Pancreas (tissue), 10 donors: ENCODE measurements at regions of chr11 and their contacts with region 1.

Region 1: DNA sequence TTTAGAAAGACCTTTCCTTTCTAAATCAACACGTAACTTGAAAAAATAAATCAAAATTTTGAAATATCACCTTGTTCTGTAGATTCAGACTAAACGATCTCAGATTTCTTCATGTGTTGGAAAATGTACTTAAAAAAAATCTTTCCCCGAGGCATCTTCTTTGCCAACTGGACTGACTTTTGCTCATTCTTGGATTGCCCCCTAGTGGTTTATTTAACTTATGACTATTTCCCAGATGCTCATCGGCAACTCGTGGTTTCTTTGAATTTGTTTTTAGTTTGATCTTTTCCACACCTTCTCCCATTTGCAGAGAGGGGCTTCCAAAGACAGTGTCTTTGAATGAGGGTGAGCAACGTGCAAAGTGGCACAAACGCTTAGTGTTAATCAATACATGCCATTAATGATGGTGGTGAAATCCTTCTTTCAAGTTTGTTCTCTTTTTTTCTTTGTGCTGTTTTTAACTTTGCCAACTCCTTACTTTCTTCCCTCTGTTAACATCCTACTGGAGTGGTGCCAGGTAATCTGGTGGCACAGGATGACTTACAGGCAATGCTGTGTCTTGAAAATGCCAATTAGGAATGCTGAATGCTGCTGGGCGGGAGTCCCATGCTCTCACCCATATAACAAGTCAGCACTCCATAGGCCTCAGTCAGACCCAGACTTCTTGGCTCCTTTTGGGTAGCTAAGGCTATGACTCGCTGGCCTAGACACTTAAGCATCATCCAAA is 18.3 kb downstream of the PRSS23 start:
- DNase-seq: peak in 1 of 6 donors; percentile 16
- ATAC-seq: peak; percentile 61 to 90 (median 83)
- H3K4me3 ChIP-seq: no peak overlapping the region
- H3K27ac ChIP-seq: no peak overlapping the region
- H3K4me1 ChIP-seq: peaks cover 0 to 4% (median 0%) of the 10 kb centered on the region in 3 donors
- H3K27me3 ChIP-seq: no peaks in the 10 kb centered on the region
- CTCF ChIP-seq: peak; percentile 49 to 76 (median 60)

Region 2: DNA sequence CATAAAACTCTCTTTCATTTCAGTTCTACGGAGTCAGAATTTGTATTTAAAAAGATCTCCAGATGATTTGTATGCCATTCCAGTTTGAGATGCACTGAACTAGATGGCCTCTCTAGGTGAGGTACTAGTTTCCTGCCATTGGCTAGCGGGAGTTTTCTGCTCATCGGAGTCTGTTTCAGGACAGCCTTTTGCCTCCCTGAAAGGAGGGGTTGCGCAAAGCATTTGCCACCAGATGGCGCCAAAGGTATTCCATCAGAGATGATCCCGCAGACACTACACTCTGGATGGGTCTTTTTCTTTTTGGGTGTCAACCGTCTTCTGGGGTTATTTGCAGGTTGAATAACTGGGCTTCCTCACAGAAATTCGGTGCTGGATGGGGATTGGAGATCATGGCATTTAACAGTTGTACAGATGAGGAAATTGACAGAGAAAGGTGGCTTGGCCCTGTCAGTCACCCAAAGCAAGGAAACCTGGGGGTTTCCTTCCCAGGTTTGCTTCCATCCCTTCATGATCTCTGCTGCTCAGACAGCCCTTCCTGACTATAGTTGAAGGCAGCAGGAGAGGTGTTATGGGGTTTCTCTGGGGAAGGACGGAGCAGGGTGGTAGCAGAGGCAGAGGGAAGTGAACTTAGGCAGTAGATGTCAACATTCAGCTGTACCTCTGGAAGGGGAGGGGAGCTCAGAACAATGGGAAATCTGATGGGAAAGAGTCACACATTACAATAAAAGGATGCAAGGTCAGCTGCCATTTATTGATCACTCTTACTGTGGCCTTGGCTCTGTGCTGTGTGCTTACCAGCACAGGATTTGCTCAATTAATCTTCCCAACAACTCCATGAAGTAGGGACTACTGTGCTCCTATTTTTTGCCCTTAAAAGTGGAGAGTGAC is 362.3 kb before region 1 on chr11:
- intact Hi-C with region 1: loop called (anchors 5 to 10 kb)
- DNase-seq: peak; percentile 60 to 85 (median 78)
- ATAC-seq: peak; percentile 76 to 86 (median 84)
- H3K4me3 ChIP-seq: no peak overlapping the region
- H3K27ac ChIP-seq: peak overlapping the region in 1 of 4 donors; percentile 44
- H3K4me1 ChIP-seq: peaks cover 0 to 3% (median 0%) of the 10 kb centered on the region in 3 donors
- H3K27me3 ChIP-seq: no peaks in the 10 kb centered on the region
- CTCF ChIP-seq: peak; percentile 71 to 84 (median 72)

Region 3: DNA sequence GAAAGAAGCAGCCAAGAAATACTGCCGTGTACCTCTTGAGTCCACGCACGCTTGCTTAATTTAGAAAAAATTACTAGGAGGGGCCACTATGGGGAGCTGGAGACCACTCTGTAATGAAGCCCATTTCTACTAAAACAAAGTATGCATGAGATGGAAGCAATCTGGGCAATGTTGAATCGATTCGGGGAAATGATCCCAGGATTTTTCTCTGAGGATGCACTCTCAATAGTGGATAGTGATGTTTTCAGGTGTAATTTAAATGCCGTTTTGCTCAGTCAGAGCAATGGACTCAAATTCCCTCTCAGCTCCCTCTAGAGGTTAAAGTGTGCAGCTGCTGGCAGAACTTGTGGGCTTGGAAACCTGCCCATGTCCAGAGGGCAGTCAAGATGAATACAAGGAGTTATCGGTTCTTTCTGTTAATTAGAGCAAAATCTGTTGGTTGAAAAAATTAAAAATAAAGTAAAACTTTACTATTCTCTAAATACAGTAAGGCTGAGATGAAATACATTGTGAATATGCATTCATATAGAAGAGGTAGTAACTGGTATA is 210.3 kb before region 1 on chr11:
- intact Hi-C with region 1: loop called in 1 of 3 experiments (anchors 10 kb)
- DNase-seq: peak; percentile 56 to 81 (median 66)
- ATAC-seq: peak; percentile 85 to 96 (median 94)
- H3K4me3 ChIP-seq: peak overlapping the region in 1 of 4 donors; percentile 12
- H3K27ac ChIP-seq: no peak overlapping the region
- H3K4me1 ChIP-seq: peaks cover 8 to 18% (median 13%) of the 10 kb centered on the region in 3 donors
- H3K27me3 ChIP-seq: no peaks in the 10 kb centered on the region
- CTCF ChIP-seq: peak; percentile 72 to 85 (median 84)

Region 4: DNA sequence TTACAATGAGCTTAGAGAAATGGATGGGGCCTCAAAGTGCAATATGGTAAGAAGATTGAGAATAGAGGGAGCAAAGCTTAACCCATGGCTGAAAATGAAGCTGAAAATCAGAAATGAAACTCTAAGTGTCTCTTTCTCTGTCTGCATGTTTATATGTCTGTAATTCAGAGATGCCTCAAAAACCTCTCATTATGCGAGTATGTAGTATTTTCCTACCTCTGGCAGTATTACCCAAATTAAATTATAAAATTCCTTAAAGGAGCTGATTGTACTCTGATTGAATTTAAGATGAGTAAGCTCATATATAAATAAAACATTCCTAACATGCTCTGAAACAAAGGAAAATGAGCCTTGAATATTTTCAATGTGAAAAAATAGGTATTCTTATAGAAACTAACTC is 58.1 kb before region 1 on chr11:
- intact Hi-C with region 1: no loop called
- DNase-seq: no peak
- ATAC-seq: no peak
- H3K4me3 ChIP-seq: no peak overlapping the region
- H3K27ac ChIP-seq: no peak overlapping the region
- H3K4me1 ChIP-seq: no peaks in the 10 kb centered on the region
- H3K27me3 ChIP-seq: no peaks in the 10 kb centered on the region
- CTCF ChIP-seq: no peak